Uterus (tissue), 4 donors: ENCODE measurements at regions of chr1 and their contacts with region 1.

Region 1: GRCh38 chr1:20696397-20697329 is 21.1 kb downstream of the KIF17 start:
- DNase-seq: peak; percentile 91 to 92
- H3K4me3 ChIP-seq: peak overlapping the region; percentile 51 to 56
- H3K27ac ChIP-seq: peak overlapping the region; percentile 92 to 95
- H3K4me1 ChIP-seq: peaks cover 3 to 5% of the 10 kb centered on the region in 2 donors
- H3K27me3 ChIP-seq: no peaks in the 10 kb centered on the region
- CTCF ChIP-seq: peak; percentile 77 to 94 (median 89)
- POLR2A ChIP-seq: peak in 1 of 2 donors; percentile 44

Region 2: DNA sequence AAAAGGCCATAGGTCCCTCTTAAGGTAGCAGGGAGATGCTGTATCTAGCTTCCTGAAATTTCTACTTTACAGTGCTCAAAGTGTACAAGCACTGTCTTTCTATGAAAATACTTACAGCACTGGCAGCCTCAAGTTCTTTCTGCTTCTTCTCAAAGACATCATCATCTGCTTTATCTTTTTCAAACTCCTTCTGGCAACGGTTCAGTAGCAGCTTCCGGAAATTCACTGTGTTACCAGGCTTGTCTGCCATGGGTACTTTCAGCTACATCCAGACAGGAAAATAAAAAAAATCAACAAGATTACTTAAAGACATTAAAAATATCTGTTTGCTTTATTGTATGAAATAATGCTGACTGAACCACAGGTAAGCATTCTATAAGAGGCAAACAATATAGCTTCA is 168.3 kb after region 1 on chr1:
- intact Hi-C with region 1: no loop called
- DNase-seq: no peak
- H3K4me3 ChIP-seq: no peak overlapping the region
- H3K27ac ChIP-seq: no peak overlapping the region
- H3K4me1 ChIP-seq: no peaks in the 10 kb centered on the region
- H3K27me3 ChIP-seq: no peaks in the 10 kb centered on the region
- CTCF ChIP-seq: no peak
- POLR2A ChIP-seq: no peak

Region 3: DNA sequence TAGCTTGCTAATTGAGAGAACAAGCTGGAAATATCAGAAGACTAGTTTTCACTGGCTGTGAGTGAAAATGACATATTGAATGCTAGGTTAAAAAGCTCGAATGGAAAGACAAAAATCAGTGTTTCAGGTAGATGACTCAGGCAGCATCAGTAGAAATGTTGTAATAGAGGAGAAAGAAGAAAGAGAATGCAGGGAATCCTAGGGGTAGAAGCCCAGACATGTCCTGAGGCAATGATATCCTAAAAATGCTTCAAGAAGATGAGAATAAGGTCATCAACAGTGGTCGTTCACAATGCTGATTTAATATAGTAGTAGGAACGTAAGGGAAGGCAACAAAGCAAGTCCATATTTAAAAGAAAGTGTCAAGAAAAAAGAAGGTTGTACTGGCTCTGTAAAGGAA is 187.1 kb after region 1 on chr1:
- intact Hi-C with region 1: no loop called
- DNase-seq: no peak
- H3K4me3 ChIP-seq: no peak overlapping the region
- H3K27ac ChIP-seq: no peak overlapping the region
- H3K4me1 ChIP-seq: no peaks in the 10 kb centered on the region
- H3K27me3 ChIP-seq: no peaks in the 10 kb centered on the region
- CTCF ChIP-seq: no peak
- POLR2A ChIP-seq: no peak

Region 4: GRCh38 chr1:21198929-21199328 is 502.3 kb after region 1 on chr1:
- intact Hi-C with region 1: loop called (anchors 5 kb)
- DNase-seq: no peak
- H3K4me3 ChIP-seq: no peak overlapping the region
- H3K27ac ChIP-seq: no peak overlapping the region
- H3K4me1 ChIP-seq: no peaks in the 10 kb centered on the region
- H3K27me3 ChIP-seq: no peaks in the 10 kb centered on the region
- CTCF ChIP-seq: no peak
- POLR2A ChIP-seq: no peak